Psoas muscle (tissue), 8 donors: ENCODE measurements at regions of chr1 and their contacts with region 1.

Region 1: GRCh38 chr1:119008483-119009311 is 20.6 kb upstream of the TBX15 start:
- DNase-seq: no peak
- ATAC-seq: peak; percentile 70 to 87 (median 74)
- H3K4me3 ChIP-seq: peak overlapping the region; percentile 28
- H3K27ac ChIP-seq: no peak overlapping the region
- H3K4me1 ChIP-seq: no peaks in the 10 kb centered on the region
- H3K27me3 ChIP-seq: peaks cover 0 to 27% (median 6%) of the 10 kb centered on the region in 3 donors
- CTCF ChIP-seq: peak; percentile 76

Region 2: DNA sequence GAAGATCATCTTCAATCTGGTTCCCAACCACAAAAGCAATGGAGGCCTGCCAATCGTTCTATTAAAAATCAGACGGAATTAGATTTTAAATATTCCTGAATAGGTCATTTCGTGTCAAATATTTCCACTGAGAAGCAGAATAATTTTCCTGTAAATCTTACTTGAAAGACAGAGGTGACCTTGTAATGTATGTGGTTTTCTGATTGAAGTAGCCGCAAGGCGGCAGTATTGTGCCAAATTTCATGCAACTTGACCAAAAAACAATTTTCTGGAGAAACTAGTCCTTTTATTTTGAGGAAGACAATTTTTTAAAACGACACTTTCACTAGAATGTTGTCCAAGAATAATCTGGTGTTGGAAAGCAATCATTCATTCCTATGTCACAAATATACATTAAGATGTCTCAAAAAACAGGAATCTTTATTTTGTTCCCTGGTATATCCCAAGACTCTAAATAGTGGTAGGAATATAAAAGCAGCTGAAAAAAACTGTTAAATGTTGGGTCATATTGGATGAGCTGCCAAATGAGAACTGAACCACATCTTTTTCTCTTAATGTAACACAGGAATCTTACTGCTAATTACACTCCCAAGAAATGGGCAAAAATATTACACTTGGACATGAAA is 857.3 kb before region 1 on chr1:
- intact Hi-C with region 1: loop called (anchors 2 to 5 kb)
- DNase-seq: peak in 1 of 2 donors; percentile 57
- ATAC-seq: peak in 1 of 4 donors; percentile 56
- H3K4me3 ChIP-seq: no peak overlapping the region
- H3K27ac ChIP-seq: no peak overlapping the region
- H3K4me1 ChIP-seq: no peaks in the 10 kb centered on the region
- H3K27me3 ChIP-seq: no peaks in the 10 kb centered on the region
- CTCF ChIP-seq: peak; percentile 76

Region 3: GRCh38 chr1:118223426-118223825 is 785.3 kb before region 1 on chr1:
- intact Hi-C with region 1: loop called (anchors 5 to 10 kb)
- DNase-seq: peak in 1 of 2 donors; percentile 49
- ATAC-seq: peak; percentile 78 to 98 (median 95)
- H3K4me3 ChIP-seq: no peak overlapping the region
- H3K27ac ChIP-seq: no peak overlapping the region
- H3K4me1 ChIP-seq: peaks cover 3% of the 10 kb centered on the region
- H3K27me3 ChIP-seq: no peaks in the 10 kb centered on the region
- CTCF ChIP-seq: peak; percentile 65

Region 4: GRCh38 chr1:118304722-118305359 is 703.9 kb before region 1 on chr1:
- intact Hi-C with region 1: loop called in 1 of 2 experiments (anchors 5 kb)
- DNase-seq: no peak
- ATAC-seq: peak; percentile 22 to 58 (median 52)
- H3K4me3 ChIP-seq: no peak overlapping the region
- H3K27ac ChIP-seq: peak overlapping the region; percentile 88
- H3K4me1 ChIP-seq: peaks cover 44% of the 10 kb centered on the region
- H3K27me3 ChIP-seq: no peaks in the 10 kb centered on the region
- CTCF ChIP-seq: peak; percentile 58

Region 5: GRCh38 chr1:118944133-118944532 is 64.6 kb before region 1 on chr1:
- intact Hi-C with region 1: no loop called
- DNase-seq: no peak
- ATAC-seq: peak in 1 of 4 donors; percentile 55
- H3K4me3 ChIP-seq: peak overlapping the region; percentile 6
- H3K27ac ChIP-seq: peak overlapping the region; percentile 81
- H3K4me1 ChIP-seq: peaks cover 84% of the 10 kb centered on the region
- H3K27me3 ChIP-seq: no peaks in the 10 kb centered on the region
- CTCF ChIP-seq: no peak

Region 6: GRCh38 chr1:118963456-118964430 is 45.0 kb before region 1 on chr1:
- intact Hi-C with region 1: no loop called
- DNase-seq: peak in 1 of 2 donors; percentile 67
- ATAC-seq: peak; percentile 64 to 77 (median 68)
- H3K4me3 ChIP-seq: no peak overlapping the region
- H3K27ac ChIP-seq: peak overlapping the region; percentile 91
- H3K4me1 ChIP-seq: peaks cover 92% of the 10 kb centered on the region
- H3K27me3 ChIP-seq: no peaks in the 10 kb centered on the region
- CTCF ChIP-seq: no peak

Region 7: GRCh38 chr1:119435052-119435451 is 426.4 kb after region 1 on chr1:
- intact Hi-C with region 1: no loop called
- DNase-seq: no peak
- ATAC-seq: no peak
- H3K4me3 ChIP-seq: no peak overlapping the region
- H3K27ac ChIP-seq: no peak overlapping the region
- H3K4me1 ChIP-seq: no peaks in the 10 kb centered on the region
- H3K27me3 ChIP-seq: no peaks in the 10 kb centered on the region
- CTCF ChIP-seq: no peak